Body of pancreas (tissue), 4 donors: ENCODE measurements at regions of chr3 and their contacts with region 1.

Region 1: DNA sequence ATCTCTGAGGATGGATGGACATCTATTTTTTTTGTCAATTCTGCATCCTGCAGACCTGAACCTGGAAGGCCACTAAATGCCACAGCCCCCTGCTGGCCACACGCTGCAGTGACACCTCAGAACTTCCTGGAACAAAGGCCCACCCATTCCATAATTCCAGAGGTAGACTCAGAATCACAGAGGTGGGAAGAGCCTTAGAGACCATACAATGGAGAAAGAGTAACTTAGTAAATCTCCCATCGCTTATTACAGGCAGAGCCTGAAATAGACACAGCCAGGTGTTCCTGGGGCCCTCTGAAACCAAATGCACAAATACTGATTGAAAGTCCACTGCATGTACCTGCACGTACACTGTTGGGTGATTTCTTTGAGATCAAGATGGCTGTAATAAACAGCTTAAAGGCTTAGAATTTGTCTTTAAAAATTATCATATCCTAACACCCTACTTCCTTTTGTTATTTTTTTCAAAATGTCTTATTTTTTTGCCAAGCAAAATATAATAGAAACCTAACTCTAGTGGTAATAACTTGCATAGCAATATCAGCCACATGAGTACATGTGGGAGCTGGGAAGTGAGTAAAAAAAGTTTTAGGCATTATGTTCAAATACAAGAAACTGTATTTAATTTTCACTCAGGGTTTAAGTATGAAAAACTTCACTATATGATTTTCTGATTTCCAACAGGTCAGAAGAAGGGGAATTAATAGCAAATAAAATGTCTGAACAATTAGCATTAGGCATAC is 62.7 kb downstream of the EOMES start:
- DNase-seq: peak; percentile 48 to 69 (median 56)
- ATAC-seq: peak; percentile 67
- H3K4me3 ChIP-seq: no peak overlapping the region
- H3K27ac ChIP-seq: no peak overlapping the region
- H3K4me1 ChIP-seq: no peaks in the 10 kb centered on the region
- H3K27me3 ChIP-seq: no peaks in the 10 kb centered on the region
- CTCF ChIP-seq: peak; percentile 63 to 71 (median 66)
- POLR2A ChIP-seq: no peak

Region 2: GRCh38 chr3:26559227-26559626 is 1100.2 kb before region 1 on chr3:
- intact Hi-C with region 1: no loop called
- DNase-seq: no peak
- ATAC-seq: no peak
- H3K4me3 ChIP-seq: no peak overlapping the region
- H3K27ac ChIP-seq: no peak overlapping the region
- H3K4me1 ChIP-seq: no peaks in the 10 kb centered on the region
- H3K27me3 ChIP-seq: no peaks in the 10 kb centered on the region
- CTCF ChIP-seq: no peak
- POLR2A ChIP-seq: no peak

Region 3: DNA sequence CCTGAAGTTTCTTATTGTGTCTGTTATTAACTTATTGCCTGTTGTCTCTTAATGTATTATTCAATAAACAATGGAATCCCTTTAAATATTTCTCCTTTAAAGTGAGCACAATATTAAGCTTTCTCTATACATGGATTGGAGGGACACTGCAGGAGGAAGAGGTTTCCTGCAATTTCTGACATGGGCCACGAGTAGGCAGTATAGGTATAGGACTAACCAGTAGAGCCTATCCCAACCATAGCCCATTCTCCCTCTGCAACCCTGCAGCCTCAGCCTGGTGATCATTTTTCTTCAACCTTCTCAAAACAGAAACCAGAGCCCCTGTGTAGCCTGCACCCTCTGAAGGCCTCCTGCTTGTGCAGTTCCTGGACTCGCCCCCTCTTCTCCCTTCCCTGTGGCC is 415.1 kb before region 1 on chr3:
- intact Hi-C with region 1: no loop called
- DNase-seq: no peak
- ATAC-seq: no peak
- H3K4me3 ChIP-seq: no peak overlapping the region
- H3K27ac ChIP-seq: no peak overlapping the region
- H3K4me1 ChIP-seq: no peaks in the 10 kb centered on the region
- H3K27me3 ChIP-seq: no peaks in the 10 kb centered on the region
- CTCF ChIP-seq: no peak
- POLR2A ChIP-seq: no peak

Region 4: GRCh38 chr3:27326629-27327545 is 332.6 kb before region 1 on chr3:
- intact Hi-C with region 1: loop called (anchors 10 kb)
- DNase-seq: peak in 2 of 4 donors; percentile 9 to 28
- ATAC-seq: no peak
- H3K4me3 ChIP-seq: no peak overlapping the region
- H3K27ac ChIP-seq: no peak overlapping the region
- H3K4me1 ChIP-seq: no peaks in the 10 kb centered on the region
- H3K27me3 ChIP-seq: no peaks in the 10 kb centered on the region
- CTCF ChIP-seq: no peak
- POLR2A ChIP-seq: no peak

Region 5: GRCh38 chr3:28268989-28269388 is 609.5 kb after region 1 on chr3:
- intact Hi-C with region 1: no loop called
- DNase-seq: no peak
- ATAC-seq: no peak
- H3K4me3 ChIP-seq: no peak overlapping the region
- H3K27ac ChIP-seq: no peak overlapping the region
- H3K4me1 ChIP-seq: peaks cover 15% of the 10 kb centered on the region
- H3K27me3 ChIP-seq: no peaks in the 10 kb centered on the region
- CTCF ChIP-seq: no peak
- POLR2A ChIP-seq: no peak